OCI-LY7 (cell line): ENCODE measurements at regions of chr5 and their contacts with region 1.

Region 1: GRCh38 chr5:169302491-169303118 is 1.7 kb upstream of the SLIT3 start:
- DNase-seq: peak; percentile 70
- H3K4me3 ChIP-seq: no peak overlapping the region
- H3K27ac ChIP-seq: no peak overlapping the region
- H3K4me1 ChIP-seq: no peaks in the 10 kb centered on the region
- CTCF ChIP-seq: peak; percentile 96

Region 2: GRCh38 chr5:168268949-168269943 is 1033.4 kb before region 1 on chr5:
- CTCF ChIA-PET with region 1: no interaction called
- POLR2A ChIA-PET with region 1: no interaction called
- intact Hi-C with region 1: loop called (anchors 1 kb)
- DNase-seq: peak; percentile 69
- H3K4me3 ChIP-seq: no peak overlapping the region
- H3K27ac ChIP-seq: no peak overlapping the region
- H3K4me1 ChIP-seq: no peaks in the 10 kb centered on the region
- CTCF ChIP-seq: peak; percentile 85

Region 3: GRCh38 chr5:168679515-168679920 is 623.1 kb before region 1 on chr5:
- CTCF ChIA-PET with region 1: no interaction called
- POLR2A ChIA-PET with region 1: no interaction called
- intact Hi-C with region 1: loop called (anchors 2 kb)
- DNase-seq: peak; percentile 59
- H3K4me3 ChIP-seq: no peak overlapping the region
- H3K27ac ChIP-seq: no peak overlapping the region
- H3K4me1 ChIP-seq: no peaks in the 10 kb centered on the region
- CTCF ChIP-seq: peak; percentile 92

Region 4: GRCh38 chr5:168987543-168988300 is 314.9 kb before region 1 on chr5:
- CTCF ChIA-PET with region 1: no interaction called
- POLR2A ChIA-PET with region 1: no interaction called
- intact Hi-C with region 1: loop called (anchors 2 kb)
- DNase-seq: peak; percentile 51
- H3K4me3 ChIP-seq: no peak overlapping the region
- H3K27ac ChIP-seq: no peak overlapping the region
- H3K4me1 ChIP-seq: peaks cover 7% of the 10 kb centered on the region
- CTCF ChIP-seq: peak; percentile 95

Region 5: DNA sequence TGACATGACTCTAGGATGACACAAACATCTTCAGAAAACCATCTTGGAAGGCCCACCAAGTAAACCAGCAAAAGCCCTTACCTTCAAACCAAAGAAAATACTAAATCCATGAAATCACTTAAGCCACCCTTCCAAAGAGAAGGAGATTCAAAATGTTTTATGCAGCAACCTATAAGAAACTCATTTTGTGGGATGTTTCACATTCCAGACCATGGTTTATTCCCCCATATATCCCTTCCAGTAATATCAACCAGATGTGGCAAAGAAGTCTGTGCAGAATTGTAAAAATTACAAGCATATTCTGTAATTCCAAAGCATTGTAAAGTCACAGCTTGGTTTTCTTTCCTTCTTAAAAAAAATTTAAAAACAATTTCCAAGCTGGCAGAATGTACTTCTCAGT is 119.0 kb before region 1 on chr5:
- CTCF ChIA-PET with region 1: no interaction called
- POLR2A ChIA-PET with region 1: no interaction called
- intact Hi-C with region 1: no loop called
- DNase-seq: no peak
- H3K4me3 ChIP-seq: no peak overlapping the region
- H3K27ac ChIP-seq: no peak overlapping the region
- H3K4me1 ChIP-seq: no peaks in the 10 kb centered on the region
- CTCF ChIP-seq: no peak

Region 6: DNA sequence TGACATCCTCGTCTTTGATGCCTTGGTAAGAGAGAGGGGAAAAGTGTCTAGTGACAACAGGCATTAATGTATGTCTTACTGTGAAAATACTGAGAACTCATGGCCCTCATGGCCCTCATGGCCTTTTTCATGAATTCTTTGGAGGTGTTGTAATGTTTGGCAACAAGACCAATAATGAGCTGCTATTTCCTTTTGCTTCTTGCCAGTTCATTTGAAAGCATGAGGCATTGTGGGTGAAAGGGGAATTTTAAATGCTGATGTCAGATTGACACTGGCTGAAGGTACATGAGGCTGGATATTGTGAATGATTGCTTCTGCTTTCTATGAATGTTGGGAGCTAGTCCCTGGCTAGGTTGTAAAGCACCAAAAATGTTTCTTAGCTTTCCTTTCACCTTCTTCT is 413.7 kb after region 1 on chr5:
- CTCF ChIA-PET with region 1: no interaction called
- POLR2A ChIA-PET with region 1: no interaction called
- intact Hi-C with region 1: no loop called
- DNase-seq: no peak
- H3K4me3 ChIP-seq: no peak overlapping the region
- H3K27ac ChIP-seq: no peak overlapping the region
- H3K4me1 ChIP-seq: no peaks in the 10 kb centered on the region
- CTCF ChIP-seq: no peak